A673 (cell line): ENCODE measurements at regions of chr15 and their contacts with region 1.

Region 1: DNA sequence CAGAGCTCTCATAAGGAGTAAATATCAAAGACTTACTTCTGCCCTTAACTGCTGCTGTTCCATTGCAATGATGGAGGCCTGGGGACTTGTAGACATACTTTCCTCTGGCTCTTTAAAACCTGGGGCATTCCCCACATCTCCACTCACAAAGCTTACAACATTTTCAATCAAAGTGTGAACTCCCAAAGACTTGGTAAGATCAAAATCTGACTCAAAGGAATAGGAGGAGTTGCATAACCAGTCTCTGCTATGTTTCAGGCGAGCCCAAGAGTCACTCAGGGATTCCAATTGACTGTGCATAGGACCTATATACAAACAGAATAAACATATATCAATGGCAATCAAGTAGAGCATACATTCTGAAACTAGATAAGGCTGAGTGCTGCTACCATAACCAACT is 101.5 kb downstream of the FBXL22 start:
- DNase-seq: no peak
- H3K4me3 ChIP-seq: no peak overlapping the region
- H3K27ac ChIP-seq: no peak overlapping the region
- H3K4me1 ChIP-seq: peaks cover 4% of the 10 kb centered on the region
- H3K27me3 ChIP-seq: no peaks in the 10 kb centered on the region
- CTCF ChIP-seq: no peak

Region 2: DNA sequence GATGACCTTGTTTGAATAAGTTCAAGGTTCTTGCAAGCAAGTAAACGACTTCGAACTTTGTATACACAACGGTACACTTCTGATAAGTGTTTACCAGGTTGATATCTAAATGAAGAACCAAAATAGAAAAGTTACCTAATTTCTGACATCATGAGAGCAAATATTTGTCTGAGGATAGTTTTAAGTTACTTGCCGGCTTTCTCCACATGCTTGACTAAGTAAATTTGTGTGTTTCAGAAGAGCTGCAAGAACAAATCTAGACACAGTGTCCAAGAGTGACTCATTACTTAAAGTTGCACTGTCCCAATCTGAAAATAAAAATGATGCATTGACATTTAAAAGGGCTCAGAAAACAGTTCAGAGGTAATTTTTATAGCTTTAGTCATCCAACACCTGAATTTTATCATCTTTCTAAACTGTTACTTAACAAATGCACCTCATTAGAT is 19.9 kb after region 1 on chr15:
- CTCF ChIA-PET with region 1: no interaction called
- POLR2A ChIA-PET with region 1: no interaction called
- intact Hi-C with region 1: no loop called
- DNase-seq: no peak
- H3K4me3 ChIP-seq: no peak overlapping the region
- H3K27ac ChIP-seq: no peak overlapping the region
- H3K4me1 ChIP-seq: no peaks in the 10 kb centered on the region
- H3K27me3 ChIP-seq: no peaks in the 10 kb centered on the region
- CTCF ChIP-seq: no peak

Region 3: DNA sequence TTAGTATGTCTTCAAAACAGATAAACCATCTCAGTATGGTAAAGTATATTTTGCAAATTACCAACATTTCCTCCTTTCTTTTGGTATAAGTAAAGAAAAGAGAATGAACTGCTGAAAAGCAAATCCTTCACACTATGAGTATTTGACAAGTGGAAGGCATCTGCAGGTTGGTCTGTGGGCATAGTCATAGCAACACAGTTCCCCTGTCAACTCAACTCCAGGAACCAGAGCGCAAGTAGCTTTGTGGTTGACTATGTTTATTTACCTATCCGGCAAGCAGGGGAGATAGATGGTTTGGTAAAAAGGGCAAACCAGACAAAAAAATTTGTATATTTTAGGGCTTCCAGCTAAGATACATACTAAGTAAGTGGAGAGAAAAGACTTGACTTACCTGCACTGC is 552.4 kb after region 1 on chr15:
- CTCF ChIA-PET with region 1: no interaction called
- POLR2A ChIA-PET with region 1: interaction called, 20 read pairs
- intact Hi-C with region 1: no loop called
- DNase-seq: no peak
- H3K4me3 ChIP-seq: no peak overlapping the region
- H3K27ac ChIP-seq: no peak overlapping the region
- H3K4me1 ChIP-seq: peaks cover 19% of the 10 kb centered on the region
- H3K27me3 ChIP-seq: no peaks in the 10 kb centered on the region
- CTCF ChIP-seq: no peak